Cardiac septum (tissue), 1 donor: ENCODE measurements at regions of chr7 and their contacts with region 1.

Region 1: DNA sequence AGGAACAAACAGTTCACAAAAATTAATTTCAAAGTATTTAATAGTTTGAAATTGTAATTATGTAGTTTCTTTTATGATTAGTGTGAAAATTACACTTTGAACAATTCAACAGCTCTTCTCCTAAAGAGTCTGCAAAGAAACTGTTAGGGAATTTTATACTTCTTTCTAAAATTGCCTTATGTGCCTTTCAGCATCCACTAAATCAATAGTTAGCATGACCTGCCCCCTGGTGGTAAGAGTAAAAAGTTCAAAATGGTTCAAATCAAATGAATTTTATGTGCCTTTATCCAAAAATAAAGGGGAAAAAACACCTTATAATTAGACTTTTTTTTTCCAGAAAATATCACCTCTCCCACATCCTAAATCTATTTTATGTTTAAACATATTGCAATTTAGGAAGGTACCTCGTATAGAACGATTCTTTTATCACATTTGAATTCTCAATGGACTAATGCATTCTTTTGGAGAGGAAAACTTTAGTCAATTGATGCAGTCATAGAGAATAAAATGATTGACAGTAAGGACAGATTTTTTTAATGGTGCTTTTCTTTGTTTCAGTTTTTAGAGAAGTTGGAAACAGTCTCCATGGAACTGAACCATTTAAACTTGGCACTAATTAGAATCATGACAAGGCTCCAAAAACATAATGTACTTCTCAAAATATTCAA is 163.7 kb downstream of the SEMA3D start:
- DNase-seq: no peak

Region 2: DNA sequence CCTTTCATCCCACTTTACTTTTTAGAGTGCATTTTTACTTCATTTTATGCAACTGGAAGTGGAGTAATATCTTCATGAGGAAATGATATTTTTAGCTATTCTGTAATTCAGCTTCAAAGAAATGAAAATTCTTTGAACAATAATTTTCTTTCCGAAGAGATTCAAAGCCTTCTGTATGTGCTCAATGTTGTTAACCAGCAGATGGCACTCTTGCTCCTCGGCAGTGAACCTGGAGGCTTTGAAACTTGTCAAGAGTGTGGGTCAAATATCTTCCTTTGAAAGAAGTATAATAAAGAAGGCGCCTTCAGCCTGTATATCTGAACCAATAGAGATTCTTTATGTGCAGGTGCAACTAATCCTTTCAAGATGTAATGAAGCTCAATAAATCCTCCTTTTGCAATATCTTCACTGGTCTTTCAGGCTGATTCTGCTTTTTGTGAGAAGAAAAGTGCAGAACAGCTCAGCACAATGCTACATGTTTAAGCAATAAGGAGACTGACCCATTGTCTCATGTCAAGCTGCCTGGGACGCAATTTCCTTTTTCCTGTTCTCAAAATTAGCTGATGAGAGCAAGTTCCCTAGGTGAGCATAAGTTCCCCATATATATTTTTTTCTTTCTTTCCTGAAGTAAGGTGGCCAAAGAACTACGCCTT is 1087.0 kb before region 1 on chr7:
- intact Hi-C with region 1: loop called (anchors 5 kb)
- DNase-seq: peak; percentile 75

Region 3: DNA sequence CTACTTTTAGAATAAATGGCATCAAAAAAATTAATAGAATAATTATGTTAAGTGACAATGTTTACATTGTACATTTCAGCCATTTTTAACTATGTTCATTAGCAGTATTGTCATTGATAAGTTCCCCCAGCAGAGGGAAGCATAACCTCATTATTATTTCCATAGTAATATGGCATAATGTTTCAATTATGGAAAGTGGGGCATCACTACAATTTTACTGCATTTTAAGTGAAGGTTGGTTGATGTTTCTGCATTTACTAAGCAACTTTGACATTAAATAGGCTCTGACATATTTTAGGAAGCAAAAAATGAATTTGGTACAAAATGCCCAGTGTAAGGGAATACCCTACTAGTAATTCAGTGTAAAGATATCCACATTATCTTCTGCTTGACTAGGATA is 1046.9 kb before region 1 on chr7:
- intact Hi-C with region 1: loop called (anchors 2 kb)
- DNase-seq: no peak

Region 4: DNA sequence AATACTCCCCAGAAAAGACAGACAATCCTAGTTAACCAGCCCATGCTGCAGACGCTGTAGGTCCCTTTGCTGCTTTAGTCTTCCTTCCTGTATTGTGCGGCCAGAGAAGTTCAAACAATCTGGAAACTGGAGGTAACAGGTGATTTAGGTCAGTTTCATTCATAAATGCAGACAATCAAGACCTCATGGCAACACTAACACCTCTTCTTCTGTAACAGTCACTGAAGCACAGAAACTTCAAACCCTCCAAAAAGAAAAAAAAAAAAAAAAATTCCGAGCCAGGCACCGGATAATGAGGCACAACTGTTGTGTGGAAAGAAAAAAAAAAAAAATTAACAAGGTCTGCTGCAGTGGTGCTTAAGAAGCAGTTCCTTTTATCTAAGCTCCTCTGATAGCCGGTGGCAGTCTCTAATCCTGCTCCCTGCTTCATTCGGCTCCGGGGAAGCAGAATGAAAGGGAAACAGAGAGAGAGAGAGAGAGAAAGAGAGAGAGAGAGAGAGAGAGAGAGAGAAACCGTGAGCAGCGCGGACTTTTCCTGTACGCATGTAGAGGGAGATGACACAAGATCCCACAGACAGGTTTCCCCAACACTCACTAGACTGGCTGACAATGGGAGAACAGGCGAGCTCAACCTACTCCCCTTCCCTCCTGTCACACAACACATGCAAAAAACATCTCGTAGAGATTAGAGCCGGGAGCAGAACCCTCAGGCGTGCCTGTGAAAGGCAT is 828.5 kb before region 1 on chr7 and contains the start of gene SEMA3A:
- intact Hi-C with region 1: loop called (anchors 10 kb)
- DNase-seq: no peak
- total RNA-seq, gene SEMA3A: 1.00 TPM